CD8-positive, alpha-beta T cell (primary cell): ENCODE measurements at regions of chr12 and their contacts with region 1.

Region 1: GRCh38 chr12:113358381-113359132 is at the start of gene PLBD2:
- DNase-seq: peak; percentile 92 to 97 (median 94)
- ATAC-seq: peak; percentile 97
- H3K4me3 ChIP-seq: peak within 1 kb of the TSS; percentile 72 to 79
- H3K4me3 Mint-ChIP-seq: peak within 1 kb of the TSS; percentile 91
- H3K27ac ChIP-seq: peak within 1 kb of the TSS; percentile 81 to 84
- H3K27ac Mint-ChIP-seq: peak within 1 kb of the TSS; percentile 96
- H3K4me1 ChIP-seq: peaks cover 14% of the 10 kb centered on the region
- H3K4me1 Mint-ChIP-seq: peaks cover 16% of the 10 kb centered on the region
- H3K27me3 ChIP-seq: peaks cover 0 to 2% of the 10 kb centered on the region in 2 experiments
- H3K27me3 Mint-ChIP-seq: no peaks in the 10 kb centered on the region
- CTCF ChIP-seq: no peak
- total RNA-seq, gene PLBD2: 9.2 to 9.9 TPM

Region 2: DNA sequence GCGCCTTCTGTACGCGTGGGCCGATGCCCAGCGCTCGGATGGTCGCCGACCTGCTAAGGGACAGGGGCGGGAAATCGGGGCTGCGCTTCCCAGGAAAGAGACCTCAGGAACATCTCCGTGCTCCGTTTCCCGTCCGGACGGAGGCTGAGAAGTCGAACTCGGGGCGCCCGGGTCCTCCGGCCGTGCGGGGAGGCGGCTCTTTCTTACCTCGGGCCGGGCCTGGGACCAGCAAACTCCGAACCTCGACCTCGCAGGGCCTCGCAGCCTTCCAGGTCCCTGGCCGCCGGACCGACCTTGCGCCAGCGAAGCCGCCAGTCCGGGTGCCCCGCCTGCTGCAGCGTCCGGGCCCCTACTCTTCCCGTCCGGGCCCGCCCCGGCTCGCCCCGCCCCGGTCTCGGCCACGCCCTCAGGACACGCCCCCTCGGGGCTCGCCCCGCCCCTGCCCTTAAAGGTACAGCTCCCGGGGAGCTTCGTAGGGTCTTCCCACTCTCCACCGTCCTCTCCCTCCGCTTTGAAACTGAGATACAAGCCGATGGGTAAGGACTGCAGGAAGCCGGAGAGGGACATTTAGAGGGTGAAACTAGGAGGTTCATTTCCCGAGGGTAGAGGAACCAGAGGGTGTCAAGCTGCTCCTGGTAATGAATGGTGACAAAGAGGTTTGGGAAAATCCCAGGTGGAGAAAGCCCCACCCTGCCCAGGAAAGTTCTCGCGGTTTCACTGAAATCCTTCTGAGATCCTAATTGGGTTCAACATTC is 23.6 kb before region 1 on chr12 and contains the start of gene SLC8B1:
- CTCF ChIA-PET with region 1: interaction called, 3 read pairs
- POLR2A ChIA-PET with region 1: interaction called, 7 read pairs
- intact Hi-C with region 1: loop called (anchors 1 kb)
- DNase-seq: peak; percentile 74 to 95 (median 86)
- ATAC-seq: peak; percentile 99
- H3K4me3 ChIP-seq: peak within 1 kb of the TSS; percentile 80 to 89
- H3K4me3 Mint-ChIP-seq: peak within 1 kb of the TSS; percentile 92
- H3K27ac ChIP-seq: peak within 1 kb of the TSS; percentile 31 to 51
- H3K27ac Mint-ChIP-seq: peak within 1 kb of the TSS; percentile 88
- H3K4me1 ChIP-seq: peaks cover 17% of the 10 kb centered on the region
- H3K4me1 Mint-ChIP-seq: peaks cover 41% of the 10 kb centered on the region
- H3K27me3 ChIP-seq: no peaks in the 10 kb centered on the region
- H3K27me3 Mint-ChIP-seq: no peaks in the 10 kb centered on the region
- CTCF ChIP-seq: no peak
- total RNA-seq, gene SLC8B1: 67.3 to 72.8 TPM